Activated CD8-positive, alpha-beta memory T cell treated with anti-CD3 and anti-CD28 coated beads, Interleukin-2, amount 10 ng/mL, durations not matched to agents 7 days and 5 days (primary cell): ENCODE measurements at regions of chr3 and their contacts with region 1.

Region 1: GRCh38 chr3:52253314-52254304 is 8.1 kb downstream of the PPM1M start:
- DNase-seq: peak; percentile 90
- ATAC-seq: peak; percentile 90
- H3K4me3 Mint-ChIP-seq: peak overlapping the region; percentile 75
- H3K27ac Mint-ChIP-seq: peak overlapping the region; percentile 100
- H3K4me1 Mint-ChIP-seq: peaks cover 89% of the 10 kb centered on the region
- H3K27me3 Mint-ChIP-seq: no peaks in the 10 kb centered on the region

Region 2: GRCh38 chr3:52238761-52239701 is 14.6 kb before region 1 on chr3 and contains the start of gene TWF2:
- CTCF ChIA-PET with region 1: interaction called, 48 read pairs
- DNase-seq: peak; percentile 87
- ATAC-seq: peak; percentile 86
- H3K4me3 Mint-ChIP-seq: peak within 1 kb of the TSS; percentile 96
- H3K27ac Mint-ChIP-seq: peak within 1 kb of the TSS; percentile 95
- H3K4me1 Mint-ChIP-seq: peaks cover 68% of the 10 kb centered on the region
- H3K27me3 Mint-ChIP-seq: no peaks in the 10 kb centered on the region
- total RNA-seq, gene TWF2: 110 to 131 TPM

Region 3: GRCh38 chr3:52270252-52270754 is 16.7 kb after region 1 on chr3:
- CTCF ChIA-PET with region 1: interaction called, 27 read pairs
- DNase-seq: no peak
- ATAC-seq: no peak
- H3K4me3 Mint-ChIP-seq: peak overlapping the region; percentile 69
- H3K27ac Mint-ChIP-seq: peak overlapping the region; percentile 85
- H3K4me1 Mint-ChIP-seq: peaks cover 84% of the 10 kb centered on the region
- H3K27me3 Mint-ChIP-seq: no peaks in the 10 kb centered on the region

Region 4: DNA sequence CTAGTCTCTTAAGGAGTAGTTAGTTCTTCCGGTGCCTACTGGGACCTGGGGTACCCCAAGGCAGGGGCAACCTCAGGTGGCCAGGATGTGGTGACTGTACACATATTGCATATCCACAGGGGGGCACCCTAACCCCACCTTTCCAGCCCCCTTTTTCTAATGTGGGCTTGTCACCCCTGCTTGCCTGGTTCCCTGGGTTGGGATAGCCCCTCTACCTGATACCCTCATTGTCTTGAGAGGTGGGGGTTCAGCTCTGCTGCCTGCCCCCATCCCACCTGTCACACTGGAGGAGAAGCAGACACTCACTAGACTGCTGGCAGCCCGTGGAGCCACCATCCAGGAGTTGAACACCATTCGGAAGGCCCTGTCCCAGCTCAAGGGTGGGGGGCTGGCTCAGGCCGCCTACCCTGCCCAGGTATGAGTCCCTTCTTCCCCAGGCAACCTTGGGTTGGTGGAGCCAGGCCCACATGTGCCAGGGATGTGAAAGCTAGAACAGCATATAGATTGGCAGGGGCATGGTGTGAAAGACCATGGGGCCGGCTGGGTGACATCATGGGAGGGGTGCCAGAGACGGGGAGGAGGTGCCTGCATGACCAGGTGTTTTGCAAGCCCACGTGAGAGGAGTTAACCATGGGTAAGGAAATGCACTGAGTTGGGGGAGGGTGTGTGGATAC is 38.0 kb after region 1 on chr3:
- CTCF ChIA-PET with region 1: interaction called, 11 read pairs
- DNase-seq: peak; percentile 75
- ATAC-seq: no peak
- H3K4me3 Mint-ChIP-seq: no peak overlapping the region
- H3K27ac Mint-ChIP-seq: peak overlapping the region; percentile 76
- H3K4me1 Mint-ChIP-seq: peaks cover 35% of the 10 kb centered on the region
- H3K27me3 Mint-ChIP-seq: no peaks in the 10 kb centered on the region